Sigmoid colon (tissue), 7 donors: ENCODE measurements at regions of chr3 and their contacts with region 1.

Region 1: GRCh38 chr3:64533617-64534317 is 154.0 kb downstream of the ADAMTS9 start:
- DNase-seq: peak; percentile 98
- H3K4me3 ChIP-seq: no peak overlapping the region
- H3K27ac ChIP-seq: peak overlapping the region; percentile 60 to 81 (median 68)
- H3K4me1 ChIP-seq: peaks cover 0 to 41% (median 22%) of the 10 kb centered on the region in 4 donors
- H3K27me3 ChIP-seq: no peaks in the 10 kb centered on the region
- CTCF ChIP-seq: peak; percentile 81 to 87 (median 85)
- EP300 ChIP-seq: peak in 3 of 4 donors; percentile 10 to 81 (median 77)
- POLR2A ChIP-seq: no peak

Region 2: GRCh38 chr3:64685800-64686445 is 152.2 kb after region 1 on chr3:
- intact Hi-C with region 1: loop called (anchors 2 kb)
- DNase-seq: peak; percentile 99
- H3K4me3 ChIP-seq: peak overlapping the region; percentile 74 to 87 (median 78)
- H3K27ac ChIP-seq: peak overlapping the region; percentile 97 to 99 (median 98)
- H3K4me1 ChIP-seq: peaks cover 0 to 36% (median 20%) of the 10 kb centered on the region in 4 donors
- H3K27me3 ChIP-seq: no peaks in the 10 kb centered on the region
- CTCF ChIP-seq: peak in 3 of 4 experiments; percentile 18 to 31 (median 22)
- EP300 ChIP-seq: peak; percentile 40 to 94 (median 68)
- POLR2A ChIP-seq: peak; percentile 90 to 91

Region 3: GRCh38 chr3:64837126-64837738 is 303.5 kb after region 1 on chr3:
- intact Hi-C with region 1: loop called (anchors 10 kb)
- DNase-seq: no peak
- H3K4me3 ChIP-seq: no peak overlapping the region
- H3K27ac ChIP-seq: peak overlapping the region; percentile 29 to 67 (median 59)
- H3K4me1 ChIP-seq: peaks cover 0 to 17% (median 11%) of the 10 kb centered on the region in 4 donors
- H3K27me3 ChIP-seq: no peaks in the 10 kb centered on the region
- CTCF ChIP-seq: no peak
- EP300 ChIP-seq: peak in 1 of 4 donors; percentile 71
- POLR2A ChIP-seq: no peak

Region 4: GRCh38 chr3:65170390-65171042 is 636.7 kb after region 1 on chr3:
- intact Hi-C with region 1: loop called (anchors 2 kb)
- DNase-seq: peak; percentile 98
- H3K4me3 ChIP-seq: no peak overlapping the region
- H3K27ac ChIP-seq: peak overlapping the region; percentile 62 to 82 (median 66)
- H3K4me1 ChIP-seq: peaks cover 0 to 24% (median 21%) of the 10 kb centered on the region in 4 donors
- H3K27me3 ChIP-seq: no peaks in the 10 kb centered on the region
- CTCF ChIP-seq: peak in 3 of 4 experiments; percentile 7 to 42 (median 29)
- EP300 ChIP-seq: peak; percentile 100
- POLR2A ChIP-seq: no peak

Region 5: DNA sequence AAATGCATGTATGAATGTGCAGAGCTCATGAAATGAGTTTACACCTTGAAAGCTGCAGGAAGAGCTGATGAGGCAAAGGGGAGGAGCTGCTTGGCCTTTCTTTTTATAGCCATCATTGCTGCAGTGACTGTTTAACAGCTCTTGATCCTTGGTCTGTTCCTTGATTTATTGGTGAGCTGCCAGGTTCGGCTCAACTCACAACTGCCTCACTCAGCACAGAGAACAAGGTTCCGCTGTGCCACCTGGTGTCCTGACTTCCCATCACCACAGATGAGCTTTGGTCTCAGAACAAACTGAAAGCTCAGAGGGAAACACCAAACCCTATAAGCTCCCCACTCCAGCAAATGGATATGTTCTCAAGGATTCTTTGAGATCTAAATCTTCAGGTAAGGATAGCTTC is 878.8 kb after region 1 on chr3:
- intact Hi-C with region 1: loop called (anchors 2 kb)
- DNase-seq: peak; percentile 90
- H3K4me3 ChIP-seq: no peak overlapping the region
- H3K27ac ChIP-seq: peak overlapping the region in 3 of 4 donors; percentile 68 to 80 (median 74)
- H3K4me1 ChIP-seq: peaks cover 0 to 71% (median 52%) of the 10 kb centered on the region in 4 donors
- H3K27me3 ChIP-seq: no peaks in the 10 kb centered on the region
- CTCF ChIP-seq: peak; percentile 17 to 57 (median 41)
- EP300 ChIP-seq: peak in 2 of 4 donors; percentile 37 to 59
- POLR2A ChIP-seq: no peak

Region 6: DNA sequence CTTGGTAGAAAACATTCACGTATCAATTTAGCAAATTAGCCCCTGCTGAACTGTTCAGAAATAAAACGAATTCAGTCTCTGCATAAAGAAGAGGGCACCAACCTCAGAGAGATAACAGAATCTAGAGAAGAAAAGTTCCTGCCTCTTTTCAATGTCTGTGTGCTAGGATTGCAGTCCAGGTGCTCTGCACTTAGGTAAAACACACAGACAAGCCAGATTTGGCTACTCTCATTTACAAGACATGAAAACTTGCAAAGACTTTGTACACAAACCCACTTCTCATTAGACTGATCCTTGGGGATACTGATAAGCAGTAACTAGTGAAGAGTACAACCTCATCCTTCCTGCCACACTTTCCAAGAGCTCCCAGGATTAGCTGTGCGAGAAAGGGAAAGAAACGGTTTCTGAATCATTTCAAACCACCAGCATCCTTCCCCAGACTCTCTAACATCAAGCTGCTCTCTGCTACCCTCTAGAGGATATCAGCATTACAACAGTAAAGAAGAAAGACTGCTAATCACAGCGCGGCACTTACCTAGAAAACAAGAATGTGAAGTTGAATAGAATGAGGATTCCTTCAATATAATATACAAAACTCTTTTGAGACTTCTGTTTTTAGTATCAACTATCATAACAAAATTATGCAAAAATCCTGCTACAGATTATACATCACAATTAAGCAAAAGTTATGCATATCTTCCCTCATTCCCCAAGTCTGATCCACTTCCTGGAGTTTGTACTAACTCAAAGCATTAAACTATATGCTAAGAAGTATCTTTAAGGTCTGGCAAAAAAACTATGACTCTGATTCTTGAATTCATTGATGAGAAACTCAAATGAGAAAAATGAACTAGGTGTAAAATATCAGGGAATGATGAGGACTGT is 1198.5 kb after region 1 on chr3:
- intact Hi-C with region 1: loop called (anchors 5 kb)
- DNase-seq: no peak
- H3K4me3 ChIP-seq: no peak overlapping the region
- H3K27ac ChIP-seq: no peak overlapping the region
- H3K4me1 ChIP-seq: peaks cover 0 to 18% (median 15%) of the 10 kb centered on the region in 4 donors
- H3K27me3 ChIP-seq: no peaks in the 10 kb centered on the region
- CTCF ChIP-seq: peak; percentile 48 to 77 (median 54)
- EP300 ChIP-seq: no peak
- POLR2A ChIP-seq: no peak